Naive thymus-derived CD4-positive, alpha-beta T cell (primary cell): ENCODE measurements at regions of chr12 and their contacts with region 1.

Region 1: GRCh38 chr12:30847259-30847658 is 79.3 kb upstream of the TSPAN11 start:
- DNase-seq: peak in 6 of 9 donors; percentile 37 to 55 (median 41)
- ATAC-seq: peak; percentile 26
- H3K4me3 ChIP-seq: no peak overlapping the region
- H3K4me3 Mint-ChIP-seq: no peak overlapping the region
- H3K27ac ChIP-seq: no peak overlapping the region
- H3K27ac Mint-ChIP-seq: no peak overlapping the region
- H3K4me1 ChIP-seq: no peaks in the 10 kb centered on the region
- H3K4me1 Mint-ChIP-seq: peaks cover 5 to 13% (median 8%) of the 10 kb centered on the region in 7 donors
- H3K27me3 ChIP-seq: no peaks in the 10 kb centered on the region
- H3K27me3 Mint-ChIP-seq: peaks cover 0 to 13% (median 0%) of the 10 kb centered on the region in 5 donors

Region 2: GRCh38 chr12:29073628-29074239 is 1773.5 kb before region 1 on chr12:
- CTCF ChIA-PET with region 1: interaction called, 3 read pairs
- POLR2A ChIA-PET with region 1: no interaction called
- intact Hi-C with region 1: loop called in 1 of 2 experiments (anchors 10 kb)
- DNase-seq: peak in 6 of 9 donors; percentile 7 to 47 (median 34)
- ATAC-seq: peak; percentile 73
- H3K4me3 ChIP-seq: no peak overlapping the region
- H3K4me3 Mint-ChIP-seq: no peak overlapping the region
- H3K27ac ChIP-seq: no peak overlapping the region
- H3K27ac Mint-ChIP-seq: peak overlapping the region in 2 of 9 donors; percentile 26 to 65
- H3K4me1 ChIP-seq: no peaks in the 10 kb centered on the region
- H3K4me1 Mint-ChIP-seq: no peaks in the 10 kb centered on the region
- H3K27me3 ChIP-seq: no peaks in the 10 kb centered on the region
- H3K27me3 Mint-ChIP-seq: peaks cover 12 to 45% (median 23%) of the 10 kb centered on the region in 5 donors

Region 3: GRCh38 chr12:29380536-29381523 is 1466.4 kb before region 1 on chr12 and contains the start of gene ERGIC2:
- CTCF ChIA-PET with region 1: no interaction called
- POLR2A ChIA-PET with region 1: no interaction called
- intact Hi-C with region 1: loop called in 1 of 2 experiments (anchors 1 kb)
- DNase-seq: peak; percentile 63 to 97 (median 95)
- ATAC-seq: peak; percentile 97
- H3K4me3 ChIP-seq: peak within 1 kb of the TSS; percentile 98
- H3K4me3 Mint-ChIP-seq: peak within 1 kb of the TSS; percentile 88 to 97 (median 94)
- H3K27ac ChIP-seq: peak within 1 kb of the TSS; percentile 91
- H3K27ac Mint-ChIP-seq: peak within 1 kb of the TSS; percentile 92 to 98 (median 96)
- H3K4me1 ChIP-seq: peaks cover 9 to 12% of the 10 kb centered on the region in 2 donors
- H3K4me1 Mint-ChIP-seq: peaks cover 20 to 63% (median 46%) of the 10 kb centered on the region in 7 donors
- H3K27me3 ChIP-seq: no peaks in the 10 kb centered on the region
- H3K27me3 Mint-ChIP-seq: no peaks in the 10 kb centered on the region
- total RNA-seq, gene ERGIC2: 36.0 to 85.7 (median 78.6) TPM

Region 4: DNA sequence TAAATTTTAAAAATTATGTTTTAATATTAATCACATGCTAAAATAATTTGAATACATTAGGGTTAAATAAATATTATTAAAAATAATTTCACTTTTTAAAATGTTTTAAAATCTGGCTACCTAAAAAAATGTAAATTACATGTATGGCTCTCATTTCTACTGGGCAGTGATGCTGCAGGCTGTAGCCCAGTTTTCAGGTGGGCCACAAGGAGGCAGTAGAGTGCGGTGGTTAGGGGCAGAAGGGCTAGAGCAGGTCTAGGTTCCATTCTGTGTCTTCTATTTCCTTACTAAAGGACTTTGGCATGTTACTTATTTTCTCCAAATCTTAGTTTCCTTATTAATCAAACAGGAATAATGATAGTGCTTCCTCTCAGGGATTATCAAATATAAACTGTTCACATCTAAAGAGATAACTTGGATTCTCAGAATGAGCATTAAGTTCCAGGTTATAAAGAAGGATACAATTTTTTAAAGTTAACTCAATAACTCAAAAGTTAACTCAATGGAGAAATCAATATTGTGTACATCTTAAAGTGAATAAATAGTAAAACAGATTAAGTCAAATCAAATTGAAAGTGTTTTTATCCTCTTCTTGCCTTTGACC is 1294.8 kb before region 1 on chr12:
- CTCF ChIA-PET with region 1: no interaction called
- POLR2A ChIA-PET with region 1: no interaction called
- intact Hi-C with region 1: loop called (anchors 1 kb)
- DNase-seq: peak in 8 of 9 donors; percentile 20 to 60 (median 44)
- ATAC-seq: peak; percentile 85
- H3K4me3 ChIP-seq: no peak overlapping the region
- H3K4me3 Mint-ChIP-seq: no peak overlapping the region
- H3K27ac ChIP-seq: no peak overlapping the region
- H3K27ac Mint-ChIP-seq: no peak overlapping the region
- H3K4me1 ChIP-seq: no peaks in the 10 kb centered on the region
- H3K4me1 Mint-ChIP-seq: no peaks in the 10 kb centered on the region
- H3K27me3 ChIP-seq: no peaks in the 10 kb centered on the region
- H3K27me3 Mint-ChIP-seq: peaks cover 0 to 15% (median 13%) of the 10 kb centered on the region in 5 donors

Region 5: DNA sequence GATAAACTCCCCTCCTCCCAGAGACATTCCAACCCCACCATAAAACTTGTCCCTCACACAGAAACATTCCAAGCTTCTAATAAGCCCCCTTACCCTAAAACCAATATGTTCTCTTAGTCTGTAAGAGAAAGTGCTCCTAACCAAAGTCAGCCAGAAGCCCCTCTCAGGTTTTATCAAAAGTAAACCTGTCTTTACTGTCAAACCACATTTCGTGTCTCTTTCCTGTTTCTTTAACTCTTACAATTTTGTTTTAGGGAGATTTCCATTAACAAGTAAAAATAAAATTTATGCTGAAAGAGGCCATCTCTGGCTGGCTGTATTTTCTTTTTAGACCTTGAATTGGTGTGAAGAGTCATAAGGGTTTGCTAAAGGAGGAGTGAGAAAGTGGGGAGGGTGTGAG is 62.8 kb before region 1 on chr12:
- CTCF ChIA-PET with region 1: no interaction called
- POLR2A ChIA-PET with region 1: no interaction called
- intact Hi-C with region 1: no loop called
- DNase-seq: no peak
- ATAC-seq: no peak
- H3K4me3 ChIP-seq: no peak overlapping the region
- H3K4me3 Mint-ChIP-seq: no peak overlapping the region
- H3K27ac ChIP-seq: no peak overlapping the region
- H3K27ac Mint-ChIP-seq: no peak overlapping the region
- H3K4me1 ChIP-seq: no peaks in the 10 kb centered on the region
- H3K4me1 Mint-ChIP-seq: no peaks in the 10 kb centered on the region
- H3K27me3 ChIP-seq: no peaks in the 10 kb centered on the region
- H3K27me3 Mint-ChIP-seq: peaks cover 17 to 30% (median 27%) of the 10 kb centered on the region in 5 donors

Region 6: GRCh38 chr12:30822385-30823155 is 24.7 kb before region 1 on chr12:
- CTCF ChIA-PET with region 1: no interaction called
- POLR2A ChIA-PET with region 1: no interaction called
- intact Hi-C with region 1: loop called in 1 of 2 experiments (anchors 2 kb)
- DNase-seq: peak in 7 of 9 donors; percentile 7 to 38 (median 32)
- ATAC-seq: peak; percentile 71
- H3K4me3 ChIP-seq: peak overlapping the region; percentile 60
- H3K4me3 Mint-ChIP-seq: peak overlapping the region; percentile 86 to 97 (median 92)
- H3K27ac ChIP-seq: no peak overlapping the region
- H3K27ac Mint-ChIP-seq: peak overlapping the region in 2 of 9 donors; percentile 18 to 54
- H3K4me1 ChIP-seq: peaks cover 0 to 11% of the 10 kb centered on the region in 2 donors
- H3K4me1 Mint-ChIP-seq: peaks cover 15 to 21% (median 19%) of the 10 kb centered on the region in 7 donors
- H3K27me3 ChIP-seq: peaks cover 0 to 2% of the 10 kb centered on the region in 2 donors
- H3K27me3 Mint-ChIP-seq: peaks cover 52 to 70% (median 54%) of the 10 kb centered on the region in 5 donors

Region 7: GRCh38 chr12:31238764-31239387 is 391.6 kb after region 1 on chr12:
- CTCF ChIA-PET with region 1: interaction called, 5 read pairs
- POLR2A ChIA-PET with region 1: no interaction called
- intact Hi-C with region 1: loop called (anchors 1 kb)
- DNase-seq: peak in 8 of 9 donors; percentile 14 to 57 (median 40)
- ATAC-seq: peak; percentile 59
- H3K4me3 ChIP-seq: no peak overlapping the region
- H3K4me3 Mint-ChIP-seq: peak overlapping the region in 3 of 10 donors; percentile 6 to 33 (median 14)
- H3K27ac ChIP-seq: no peak overlapping the region
- H3K27ac Mint-ChIP-seq: no peak overlapping the region
- H3K4me1 ChIP-seq: no peaks in the 10 kb centered on the region
- H3K4me1 Mint-ChIP-seq: peaks cover 0 to 5% (median 2%) of the 10 kb centered on the region in 7 donors
- H3K27me3 ChIP-seq: no peaks in the 10 kb centered on the region
- H3K27me3 Mint-ChIP-seq: peaks cover 6 to 32% (median 24%) of the 10 kb centered on the region in 5 donors

Region 8: DNA sequence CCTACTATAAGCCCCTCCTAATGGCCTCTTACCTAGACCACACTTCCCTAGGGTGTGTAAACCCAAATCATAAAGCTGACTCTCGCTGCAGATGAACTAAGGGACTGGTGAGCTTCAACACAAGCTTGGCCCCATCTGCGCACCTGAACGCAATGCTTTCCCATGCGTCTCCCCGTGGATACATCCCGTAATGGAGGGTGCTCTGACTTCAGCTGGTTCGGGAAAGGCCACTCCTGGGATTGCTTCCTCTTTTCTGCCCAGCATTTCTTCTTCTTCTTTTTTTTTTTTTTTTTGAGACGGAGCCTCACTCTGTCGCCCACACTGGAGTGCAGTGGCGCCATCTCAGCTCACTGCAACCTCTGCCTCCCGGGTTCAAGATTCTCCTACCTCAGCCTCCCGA is 784.5 kb after region 1 on chr12:
- CTCF ChIA-PET with region 1: no interaction called
- POLR2A ChIA-PET with region 1: no interaction called
- intact Hi-C with region 1: loop called in 1 of 2 experiments (anchors 2 kb)
- DNase-seq: no peak
- ATAC-seq: no peak
- H3K4me3 ChIP-seq: no peak overlapping the region
- H3K4me3 Mint-ChIP-seq: no peak overlapping the region
- H3K27ac ChIP-seq: no peak overlapping the region
- H3K27ac Mint-ChIP-seq: no peak overlapping the region
- H3K4me1 ChIP-seq: no peaks in the 10 kb centered on the region
- H3K4me1 Mint-ChIP-seq: peaks cover 0 to 7% (median 7%) of the 10 kb centered on the region in 7 donors
- H3K27me3 ChIP-seq: no peaks in the 10 kb centered on the region
- H3K27me3 Mint-ChIP-seq: peaks cover 0 to 7% (median 0%) of the 10 kb centered on the region in 5 donors